ENCODE measurements at regions of chr11 and their contacts with region 1.

Region 1: DNA sequence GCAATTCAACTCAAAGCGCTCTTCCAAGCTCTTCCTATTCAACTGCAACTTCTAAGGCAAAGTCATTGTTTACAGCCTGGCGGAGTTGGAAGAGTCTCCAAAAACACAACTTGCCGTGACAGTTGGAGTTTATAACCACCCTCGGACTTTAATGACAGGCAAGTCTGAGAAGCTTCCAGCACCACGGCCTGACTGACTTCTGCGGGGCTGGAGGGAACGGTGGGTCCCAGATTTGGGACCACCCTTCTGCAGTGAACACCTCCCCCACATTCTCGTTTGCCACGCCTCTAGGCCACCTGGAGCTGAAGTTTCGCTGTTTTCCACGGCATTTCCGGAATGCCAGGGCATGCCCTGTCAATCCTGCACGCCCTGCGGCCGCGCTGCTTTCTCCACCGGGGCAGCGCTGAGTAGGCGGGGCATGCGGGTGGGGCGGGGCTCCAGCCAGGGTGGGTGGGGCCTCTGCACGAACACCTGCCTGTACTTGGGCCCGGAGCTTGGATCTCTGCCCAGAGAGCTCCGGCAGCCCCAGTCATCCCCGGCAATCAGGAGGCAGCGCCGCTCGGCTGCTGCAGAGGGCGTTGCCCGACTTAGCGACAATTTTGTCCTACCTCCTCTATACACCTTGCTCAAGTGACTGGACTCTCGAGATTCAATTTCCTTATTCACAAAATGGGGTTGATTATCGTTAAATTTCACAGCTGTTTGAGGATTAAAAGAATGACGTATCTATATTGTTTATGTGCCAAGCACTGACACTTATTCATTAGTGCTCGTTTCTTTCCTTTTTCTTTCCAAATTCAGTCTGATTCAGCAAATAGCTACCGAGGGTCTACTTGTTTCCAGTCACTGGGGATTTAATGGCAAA is 48.7 kb upstream of the BIRC3 start:
- DNase-seq: peak; percentile 92
- ATAC-seq: peak; percentile 99
- H3K4me3 Mint-ChIP-seq: peak overlapping the region; percentile 71
- H3K27ac Mint-ChIP-seq: peak overlapping the region; percentile 85
- H3K4me1 Mint-ChIP-seq: peaks cover 29% of the 10 kb centered on the region
- H3K27me3 Mint-ChIP-seq: peaks cover 2% of the 10 kb centered on the region; the same call in 1 of the 2 replicates
- CTCF ChIP-seq: 0 out of 2 replicates have a peak, but pooled peaks have one; percentile 14

Region 2: GRCh38 chr11:102115557-102115956 is 153.0 kb before region 1 on chr11:
- CTCF ChIA-PET with region 1: interaction called, 11 read pairs
- POLR2A ChIA-PET with region 1: interaction called, 3 read pairs
- DNase-seq: no peak
- ATAC-seq: peak; percentile 26
- H3K4me3 Mint-ChIP-seq: peak overlapping the region; percentile 44
- H3K27ac Mint-ChIP-seq: peak overlapping the region; percentile 90
- H3K4me1 Mint-ChIP-seq: peaks cover 76% of the 10 kb centered on the region
- H3K27me3 Mint-ChIP-seq: no peaks in the 10 kb centered on the region
- CTCF ChIP-seq: no peak

Region 3: DNA sequence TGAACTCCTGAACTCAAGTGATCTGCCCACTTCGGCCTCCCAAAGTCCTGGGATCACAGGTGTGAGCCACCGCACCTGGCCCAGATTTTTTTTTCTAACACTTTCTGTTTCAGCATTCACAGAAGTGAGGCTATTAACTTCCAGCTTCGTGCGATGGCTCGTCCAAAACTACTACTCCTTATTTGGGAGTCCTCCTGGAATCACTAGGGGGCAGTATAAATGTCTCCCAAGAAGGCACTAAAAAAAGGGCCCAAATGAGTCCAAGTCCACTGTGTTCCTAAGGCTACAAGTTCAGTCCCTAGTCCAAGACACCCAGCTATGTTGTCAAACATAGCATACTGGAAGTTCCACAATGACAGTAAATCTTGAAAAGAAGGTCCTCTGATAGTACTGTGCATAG is 14.5 kb before region 1 on chr11:
- CTCF ChIA-PET with region 1: interaction called, 61 read pairs
- POLR2A ChIA-PET with region 1: no interaction called
- DNase-seq: peak; percentile 21
- ATAC-seq: peak; percentile 76
- H3K4me3 Mint-ChIP-seq: no peak overlapping the region
- H3K27ac Mint-ChIP-seq: no peak overlapping the region
- H3K4me1 Mint-ChIP-seq: peaks cover 14% of the 10 kb centered on the region
- H3K27me3 Mint-ChIP-seq: no peaks in the 10 kb centered on the region
- CTCF ChIP-seq: peak; percentile 45; the same call in 1 of the 2 replicates

Region 4: DNA sequence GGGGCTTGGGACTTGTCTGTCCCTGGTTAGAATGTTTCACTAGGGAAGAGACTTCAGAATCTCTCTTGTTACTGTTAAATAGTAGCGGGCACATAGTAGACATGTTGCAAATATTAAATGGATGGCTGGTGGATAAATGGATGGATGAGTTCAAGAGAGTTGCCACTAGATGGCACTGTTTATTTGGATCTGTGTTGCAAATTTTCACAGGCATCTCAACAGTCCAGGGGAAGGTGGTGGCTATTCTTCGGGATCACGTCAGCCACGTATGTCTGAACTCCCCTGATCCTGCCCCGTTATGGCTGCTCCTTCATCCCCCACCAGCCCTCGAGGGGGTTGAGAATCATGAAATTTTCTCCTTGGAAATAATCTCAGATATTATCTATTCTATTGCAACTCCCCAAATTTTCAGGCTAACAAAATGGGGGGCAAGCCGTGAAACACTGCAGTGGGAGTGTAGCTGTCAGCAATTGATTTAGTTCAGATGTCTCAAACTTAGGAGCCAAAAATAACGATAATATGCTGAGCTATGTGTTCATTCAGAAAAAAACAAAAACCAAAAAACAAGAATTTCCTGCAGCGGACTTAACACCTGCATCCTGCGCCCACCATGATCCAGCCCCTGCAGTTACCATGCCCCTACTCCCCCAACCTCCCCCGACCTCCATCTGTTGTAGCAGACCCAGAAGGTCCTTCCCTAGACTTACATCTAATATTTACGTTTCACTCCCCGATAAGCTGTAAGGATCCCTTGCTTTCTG is 19.6 kb after region 1 on chr11:
- CTCF ChIA-PET with region 1: interaction called, 19 read pairs
- POLR2A ChIA-PET with region 1: interaction called, 6 read pairs
- DNase-seq: no peak
- ATAC-seq: peak; percentile 90
- H3K4me3 Mint-ChIP-seq: 0 out of 2 replicates have a peak overlapping the region, but pooled peaks have one; percentile 19
- H3K27ac Mint-ChIP-seq: no peak overlapping the region
- H3K4me1 Mint-ChIP-seq: peaks cover 30% of the 10 kb centered on the region
- H3K27me3 Mint-ChIP-seq: no peaks in the 10 kb centered on the region
- CTCF ChIP-seq: peak; percentile 54

Region 5: DNA sequence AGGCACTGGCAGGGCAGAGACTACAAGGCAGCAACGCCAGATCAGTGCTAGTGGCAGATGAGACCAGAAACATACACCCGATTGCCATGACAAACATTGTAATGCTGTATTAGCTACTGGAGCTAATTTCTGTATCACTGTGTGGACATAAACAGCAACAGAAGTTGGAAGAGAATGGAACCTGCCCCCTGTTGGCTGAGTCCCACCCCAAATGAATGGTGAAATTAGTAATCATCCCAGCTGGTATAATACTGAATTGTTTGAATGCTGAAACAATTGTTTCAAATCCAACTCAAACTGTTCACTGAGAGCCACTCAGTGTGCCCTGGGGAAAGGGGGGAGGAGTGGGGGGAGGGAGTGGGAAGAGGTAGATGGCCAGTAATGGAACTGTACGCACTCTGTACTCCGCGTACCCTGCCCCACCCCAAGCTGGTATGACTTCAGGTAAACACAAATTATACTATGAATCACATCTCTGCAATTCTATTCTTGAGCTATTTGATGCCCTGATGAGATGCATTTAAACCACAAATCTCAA is 37.6 kb after region 1 on chr11:
- CTCF ChIA-PET with region 1: interaction called, 11 read pairs
- POLR2A ChIA-PET with region 1: interaction called, 3 read pairs
- DNase-seq: no peak
- ATAC-seq: no peak
- H3K4me3 Mint-ChIP-seq: no peak overlapping the region
- H3K27ac Mint-ChIP-seq: no peak overlapping the region
- H3K4me1 Mint-ChIP-seq: peaks cover 13% of the 10 kb centered on the region
- H3K27me3 Mint-ChIP-seq: no peaks in the 10 kb centered on the region; the same call in 1 of the 2 replicates
- CTCF ChIP-seq: no peak